ENCODE measurements at regions of chr4 and their contacts with region 1.

Region 1: GRCh38 chr4:1693129-1693896 is 9.2 kb upstream of the FAM53A start:
- DNase-seq: peak; percentile 92

Region 2: GRCh38 chr4:1726146-1726934 is 33.0 kb after region 1 on chr4:
- intact Hi-C with region 1: loop called (anchors 5 kb)
- DNase-seq: peak; percentile 97

Measured in posterior vena cava (tissue), 2 donors.